Activated CD4-positive, alpha-beta T cell treated with anti-CD3 and anti-CD28 coated beads, Interleukin-2, amount 10 ng/mL, durations not matched to agents 7 days and 5 days (primary cell): ENCODE measurements at regions of chr19 and their contacts with region 1.

Region 1: GRCh38 chr19:262125-262524 is 29.1 kb downstream of the PLPP2 start:
- DNase-seq: no peak
- H3K4me3 Mint-ChIP-seq: no peak overlapping the region
- H3K27ac Mint-ChIP-seq: no peak overlapping the region
- H3K4me1 Mint-ChIP-seq: peaks cover 10% of the 10 kb centered on the region
- H3K27me3 Mint-ChIP-seq: peaks cover 30% of the 10 kb centered on the region

Region 2: GRCh38 chr19:246541-246940 is 15.6 kb before region 1 on chr19:
- CTCF ChIA-PET with region 1: interaction called, 15 read pairs
- POLR2A ChIA-PET with region 1: no interaction called
- DNase-seq: no peak
- H3K4me3 Mint-ChIP-seq: no peak overlapping the region
- H3K27ac Mint-ChIP-seq: no peak overlapping the region
- H3K4me1 Mint-ChIP-seq: no peaks in the 10 kb centered on the region
- H3K27me3 Mint-ChIP-seq: peaks cover 3% of the 10 kb centered on the region